ENCODE measurements at regions of chr17 and their contacts with region 1.

Region 1: DNA sequence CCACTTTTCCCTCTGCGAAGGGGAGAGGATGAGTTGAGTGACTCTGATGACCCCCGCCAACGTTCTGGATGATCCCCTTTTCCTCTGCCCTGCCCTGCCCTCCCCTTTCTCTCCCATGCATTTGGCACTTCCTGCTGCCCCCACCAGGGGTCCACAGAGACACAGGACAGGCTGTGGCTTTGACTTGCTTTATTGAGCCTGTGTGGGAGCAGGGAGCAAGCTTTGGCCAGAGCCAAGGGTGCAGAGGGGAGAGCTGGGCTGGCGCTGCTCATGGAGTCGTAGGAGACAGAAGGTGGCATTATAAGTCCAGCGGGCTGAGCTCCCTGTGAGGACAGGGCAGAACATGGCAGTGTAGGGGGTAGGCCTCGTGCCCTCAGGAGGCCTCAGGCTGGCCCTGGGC is 1.6 kb downstream of the PPY start:
- DNase-seq: no peak
- H3K4me3 ChIP-seq: no peak overlapping the region
- H3K27ac ChIP-seq: no peak overlapping the region
- H3K27me3 ChIP-seq: peaks cover 0 to 2% (median 0%) of the 10 kb centered on the region in 45 donors
- CTCF ChIP-seq: peak in 27 of 56 donors; percentile 10 to 46 (median 24)

Region 2: DNA sequence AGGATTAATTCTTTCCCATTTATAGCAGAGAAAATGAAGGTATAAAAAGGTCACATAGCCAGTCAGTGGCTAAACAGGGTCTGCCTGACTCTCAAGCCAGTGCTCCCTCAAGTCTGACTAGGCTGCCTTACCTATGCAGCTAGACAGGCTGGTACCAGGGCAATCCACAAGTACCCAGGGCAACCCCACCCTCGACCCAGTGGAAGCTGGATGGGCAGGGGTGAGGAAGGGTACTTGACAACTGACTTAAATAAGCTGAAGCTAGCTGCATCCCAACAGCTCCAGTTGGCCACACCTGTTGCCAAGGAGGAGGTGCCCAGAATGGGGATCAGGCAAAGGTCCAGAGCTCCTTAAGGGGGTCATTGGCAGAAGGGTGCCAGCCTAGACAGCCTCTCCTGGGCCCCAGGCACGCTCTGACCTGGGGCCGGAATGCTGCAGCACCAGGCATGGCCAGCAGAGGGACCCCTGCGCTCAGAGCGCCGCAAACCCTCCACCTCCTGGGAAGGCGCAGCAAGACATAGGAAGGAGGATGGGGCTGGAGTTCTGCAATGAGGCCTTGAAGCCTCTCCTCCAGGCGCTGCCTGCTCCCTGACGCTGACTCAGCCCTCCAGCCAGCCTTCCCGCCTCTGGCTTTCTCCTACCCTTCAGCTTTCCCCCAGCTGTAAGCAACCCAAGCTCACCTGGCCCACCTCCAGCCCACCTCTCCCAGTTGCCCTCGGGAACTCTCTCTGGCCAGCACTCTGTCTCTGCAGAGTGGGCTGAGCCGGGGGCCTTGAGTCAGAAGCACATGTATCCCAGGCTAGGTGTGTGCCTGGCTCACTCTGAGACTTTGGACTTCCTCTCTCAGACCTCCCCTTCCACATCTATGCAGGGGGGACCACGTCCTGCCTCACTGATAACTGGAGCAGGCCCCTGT is 62.1 kb before region 1 on chr17:
- intact Hi-C with region 1: loop called in 1 of 2 experiments (anchors 2 kb)
- DNase-seq: peak; percentile 55 to 84 (median 72)
- H3K4me3 ChIP-seq: peak overlapping the region in 1 of 59 donors; percentile 19
- H3K27ac ChIP-seq: peak overlapping the region in 36 of 59 donors; percentile 3 to 72 (median 50)
- H3K27me3 ChIP-seq: no peaks in the 10 kb centered on the region
- CTCF ChIP-seq: peak; percentile 64 to 99 (median 94)

Region 3: DNA sequence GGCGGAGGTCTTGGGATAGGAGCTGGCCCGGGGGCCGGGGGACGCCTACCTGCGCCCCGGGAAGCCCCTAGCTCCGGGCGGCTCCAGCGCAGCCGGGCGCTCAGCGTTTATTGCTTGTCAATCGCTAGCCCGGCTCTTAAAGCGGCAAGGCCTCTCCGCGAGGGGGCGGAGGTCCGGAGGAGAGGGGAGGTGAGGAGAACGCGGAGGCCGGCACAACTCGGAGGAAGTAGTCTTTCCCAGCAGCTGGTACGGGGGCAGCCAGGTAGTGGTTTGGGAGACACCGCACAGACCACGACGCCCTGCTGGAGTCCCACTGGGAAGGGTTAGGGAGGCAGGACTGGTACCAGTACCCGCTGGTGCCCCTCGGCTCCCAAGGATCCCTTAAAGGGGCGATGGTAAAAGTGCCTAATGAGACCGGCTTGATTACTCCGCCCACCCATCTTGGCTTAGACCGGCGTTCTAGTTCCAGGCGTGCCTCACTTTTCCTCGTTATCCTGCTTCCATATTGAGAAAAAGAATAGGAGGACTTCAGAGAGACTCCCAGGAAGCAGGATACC is 33.1 kb before region 1 on chr17 and contains the start of gene MPP2:
- intact Hi-C with region 1: loop called in 1 of 2 experiments (anchors 2 kb)
- DNase-seq: peak; percentile 70 to 92 (median 87)
- H3K4me3 ChIP-seq: peak within 1 kb of the TSS; percentile 59 to 98 (median 91)
- H3K27ac ChIP-seq: peak within 1 kb of the TSS; percentile 91 to 100 (median 98)
- H3K27me3 ChIP-seq: peaks cover 0 to 4% (median 0%) of the 10 kb centered on the region in 45 donors
- CTCF ChIP-seq: peak in 43 of 56 donors; percentile 0 to 62 (median 40)
- total RNA-seq, gene MPP2: 41.7 to 92.6 (median 64.0) TPM

Region 4: DNA sequence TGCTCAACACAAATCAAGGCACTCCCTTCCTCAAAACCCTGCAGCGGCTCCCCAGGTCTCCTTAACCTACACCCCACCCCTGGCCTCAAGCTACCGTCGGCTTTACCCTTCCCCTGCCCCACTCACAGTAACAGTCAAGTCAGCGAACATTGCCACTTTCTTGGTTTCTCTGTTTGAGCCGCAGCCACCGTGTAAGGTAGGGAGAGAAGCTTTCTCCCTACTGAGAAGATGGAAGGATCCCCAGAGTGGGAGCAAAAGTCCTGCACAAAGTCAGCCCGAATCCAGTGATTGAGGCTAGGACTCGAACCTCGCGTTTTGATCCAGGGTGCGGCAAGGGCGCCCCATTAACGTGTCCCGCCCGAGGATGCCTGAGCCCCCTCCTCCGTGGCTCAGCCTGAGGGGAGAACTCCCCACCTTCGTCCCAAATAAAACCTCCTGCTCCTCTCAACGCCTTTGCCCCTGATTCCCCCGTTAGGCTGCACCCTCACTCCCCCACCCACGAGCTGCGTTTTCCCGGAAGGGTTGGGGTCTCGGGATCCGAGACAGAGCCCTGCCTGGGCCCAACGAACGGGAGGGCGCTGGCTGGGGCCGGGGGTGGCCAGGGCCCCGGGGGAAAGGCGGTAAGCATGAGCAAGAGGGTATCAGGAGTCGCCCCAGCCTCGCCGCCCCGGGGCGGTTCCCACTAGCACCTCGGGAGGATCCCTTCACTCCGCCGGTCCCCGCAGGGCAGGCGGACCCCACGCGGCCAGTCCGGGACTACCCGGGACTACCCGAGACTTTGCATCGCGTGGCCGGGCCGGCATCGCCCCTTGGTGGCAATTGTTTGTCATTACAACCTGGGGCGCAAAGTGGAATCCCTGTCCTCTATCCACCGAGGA is 53.9 kb after region 1 on chr17:
- intact Hi-C with region 1: loop called (anchors 2 to 5 kb)
- DNase-seq: peak; percentile 35 to 85 (median 72)
- H3K4me3 ChIP-seq: peak overlapping the region; percentile 26 to 71 (median 51)
- H3K27ac ChIP-seq: no peak overlapping the region
- H3K27me3 ChIP-seq: peaks cover 0 to 8% (median 0%) of the 10 kb centered on the region in 45 donors
- CTCF ChIP-seq: peak; percentile 74 to 96 (median 92)

Region 5: GRCh38 chr17:44159519-44160210 is 219.0 kb after region 1 on chr17:
- intact Hi-C with region 1: loop called in 1 of 2 experiments (anchors 10 kb)
- DNase-seq: no peak
- H3K4me3 ChIP-seq: no peak overlapping the region
- H3K27ac ChIP-seq: no peak overlapping the region
- H3K27me3 ChIP-seq: no peaks in the 10 kb centered on the region
- CTCF ChIP-seq: no peak

Measured in dorsolateral prefrontal cortex (tissue), 120 donors.